WTC11 (cell line): ENCODE measurements at regions of chr9 and their contacts with region 1.

Region 1: GRCh38 chr9:76996700-76997099 is 22.8 kb upstream of the FOXB2 start:
- DNase-seq: peak; percentile 72
- ATAC-seq: peak; percentile 98
- H3K4me3 Mint-ChIP-seq: no peak overlapping the region
- H3K27ac Mint-ChIP-seq: no peak overlapping the region
- H3K4me1 Mint-ChIP-seq: peaks cover 13% of the 10 kb centered on the region
- H3K27me3 Mint-ChIP-seq: no peaks in the 10 kb centered on the region
- CTCF ChIP-seq: peak; percentile 59

Region 2: DNA sequence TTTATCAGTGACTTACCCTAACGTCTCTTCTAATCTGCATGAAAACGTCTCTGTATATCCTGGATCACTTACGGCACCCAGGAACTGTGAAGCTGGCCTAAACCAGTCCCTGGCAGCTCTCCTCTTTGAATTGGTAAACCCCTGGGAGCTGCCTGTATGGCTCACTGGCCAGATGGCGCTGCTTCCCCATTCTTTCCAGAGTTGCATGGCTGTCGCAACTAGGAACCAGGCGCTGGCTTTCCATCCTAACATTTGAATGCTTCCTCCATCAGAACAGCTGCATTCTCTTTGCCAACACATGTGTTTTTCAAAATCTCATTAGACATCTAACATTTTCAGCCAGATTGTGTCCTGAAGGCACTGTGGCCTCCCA is 240.4 kb before region 1 on chr9:
- CTCF ChIA-PET with region 1: interaction called, 32 read pairs
- POLR2A ChIA-PET with region 1: no interaction called
- DNase-seq: peak; percentile 69
- ATAC-seq: peak; percentile 95
- H3K4me3 Mint-ChIP-seq: no peak overlapping the region
- H3K27ac Mint-ChIP-seq: peak overlapping the region; percentile 9; the same call in 1 of the 2 replicates
- H3K4me1 Mint-ChIP-seq: peaks cover 13% of the 10 kb centered on the region
- H3K27me3 Mint-ChIP-seq: no peaks in the 10 kb centered on the region
- CTCF ChIP-seq: no peak

Region 3: DNA sequence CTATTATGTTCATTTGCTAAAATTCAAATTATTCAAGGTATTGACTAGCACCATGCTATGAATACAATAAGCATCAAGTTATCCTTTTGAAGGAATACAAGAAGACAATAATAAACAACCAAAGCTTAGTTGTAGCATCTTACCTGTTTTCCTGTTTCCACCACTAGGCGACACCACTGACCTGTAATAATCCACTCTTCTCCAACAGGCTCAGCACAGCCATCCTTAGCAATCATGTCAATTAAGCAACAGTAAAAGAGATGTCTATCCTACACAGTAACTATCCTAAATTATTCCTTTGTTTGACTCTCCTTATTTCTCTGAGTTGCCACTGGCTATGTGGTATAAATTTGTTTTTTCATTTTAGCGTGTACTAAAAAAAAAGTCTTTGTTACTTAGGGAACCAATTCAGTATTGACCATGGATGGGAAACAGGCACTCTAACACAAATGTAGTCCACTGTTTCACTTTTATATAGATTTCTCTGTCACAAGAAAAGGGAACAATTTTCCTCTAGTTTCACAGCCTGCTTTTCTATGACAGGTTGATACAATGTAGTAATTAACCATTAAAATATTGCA is 186.2 kb before region 1 on chr9:
- CTCF ChIA-PET with region 1: interaction called, 91 read pairs
- POLR2A ChIA-PET with region 1: interaction called, 3 read pairs
- DNase-seq: peak; percentile 56
- ATAC-seq: peak; percentile 86
- H3K4me3 Mint-ChIP-seq: no peak overlapping the region
- H3K27ac Mint-ChIP-seq: no peak overlapping the region
- H3K4me1 Mint-ChIP-seq: no peaks in the 10 kb centered on the region
- H3K27me3 Mint-ChIP-seq: no peaks in the 10 kb centered on the region
- CTCF ChIP-seq: peak; percentile 76

Region 4: GRCh38 chr9:76905791-76906650 is 90.7 kb before region 1 on chr9 and contains the start of gene PRUNE2:
- CTCF ChIA-PET with region 1: interaction called, 10 read pairs
- POLR2A ChIA-PET with region 1: no interaction called
- DNase-seq: peak; percentile 93
- ATAC-seq: peak; percentile 96
- H3K4me3 Mint-ChIP-seq: peak within 1 kb of the TSS; percentile 83
- H3K27ac Mint-ChIP-seq: no peak within 1 kb of the TSS; the same call in 1 of the 2 replicates
- H3K4me1 Mint-ChIP-seq: peaks cover 35% of the 10 kb centered on the region
- H3K27me3 Mint-ChIP-seq: peaks cover 48% of the 10 kb centered on the region
- CTCF ChIP-seq: no peak
- total RNA-seq, gene PRUNE2: 9.3 to 13.1 TPM (median 9.6 TPM) in 3 replicates

Region 5: GRCh38 chr9:77014597-77015263 is 18.0 kb after region 1 on chr9:
- CTCF ChIA-PET with region 1: interaction called, 22 read pairs
- POLR2A ChIA-PET with region 1: no interaction called
- DNase-seq: peak; percentile 53
- ATAC-seq: no peak
- H3K4me3 Mint-ChIP-seq: peak overlapping the region; percentile 78
- H3K27ac Mint-ChIP-seq: no peak overlapping the region
- H3K4me1 Mint-ChIP-seq: peaks cover 64% of the 10 kb centered on the region
- H3K27me3 Mint-ChIP-seq: peaks cover 97% of the 10 kb centered on the region
- CTCF ChIP-seq: no peak